Activated naive CD4-positive, alpha-beta T cell treated with anti-CD3 and anti-CD28 coated beads, Interleukin-2, amount 10 ng/mL, durations not matched to agents 7 days and 5 days (primary cell): ENCODE measurements at regions of chr2 and their contacts with region 1.

Region 1: DNA sequence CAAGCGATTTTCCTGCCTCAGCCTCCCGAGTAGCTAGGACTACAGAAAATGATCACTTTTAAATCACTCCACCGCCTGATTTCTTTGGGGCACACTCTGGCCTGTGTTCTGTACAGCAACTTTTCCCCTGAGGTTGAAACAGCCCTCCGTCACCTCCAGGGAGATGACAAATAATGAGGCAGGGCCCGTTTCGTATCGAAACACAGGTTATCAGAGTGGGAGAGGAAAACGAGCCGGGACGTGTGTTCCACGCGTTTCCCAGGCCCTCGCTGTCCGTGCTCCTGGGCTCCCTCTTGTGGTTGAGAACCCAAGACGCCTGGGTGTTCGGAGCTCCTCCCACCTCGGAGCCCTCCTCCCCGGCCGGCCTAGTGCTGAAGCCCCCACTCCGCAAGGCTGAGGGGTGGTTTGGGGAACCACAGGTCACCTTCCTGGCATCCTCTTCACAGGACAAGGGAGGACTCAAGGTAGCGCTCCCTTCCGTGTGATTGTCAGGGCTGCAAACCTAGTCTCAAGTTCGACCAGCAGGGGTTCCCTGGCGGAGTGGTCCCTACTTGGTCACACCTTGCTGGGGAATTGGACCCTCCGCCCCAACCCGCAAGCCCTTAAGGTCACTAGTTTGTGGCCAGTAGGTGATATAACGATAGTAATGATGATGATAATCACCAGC is 12.8 kb downstream of the ATP6V1B1 start:
- DNase-seq: peak; percentile 83
- H3K4me3 Mint-ChIP-seq: peak overlapping the region; percentile 39
- H3K27ac Mint-ChIP-seq: no peak overlapping the region
- H3K4me1 Mint-ChIP-seq: peaks cover 12% of the 10 kb centered on the region
- H3K27me3 Mint-ChIP-seq: peaks cover 53% of the 10 kb centered on the region

Region 2: DNA sequence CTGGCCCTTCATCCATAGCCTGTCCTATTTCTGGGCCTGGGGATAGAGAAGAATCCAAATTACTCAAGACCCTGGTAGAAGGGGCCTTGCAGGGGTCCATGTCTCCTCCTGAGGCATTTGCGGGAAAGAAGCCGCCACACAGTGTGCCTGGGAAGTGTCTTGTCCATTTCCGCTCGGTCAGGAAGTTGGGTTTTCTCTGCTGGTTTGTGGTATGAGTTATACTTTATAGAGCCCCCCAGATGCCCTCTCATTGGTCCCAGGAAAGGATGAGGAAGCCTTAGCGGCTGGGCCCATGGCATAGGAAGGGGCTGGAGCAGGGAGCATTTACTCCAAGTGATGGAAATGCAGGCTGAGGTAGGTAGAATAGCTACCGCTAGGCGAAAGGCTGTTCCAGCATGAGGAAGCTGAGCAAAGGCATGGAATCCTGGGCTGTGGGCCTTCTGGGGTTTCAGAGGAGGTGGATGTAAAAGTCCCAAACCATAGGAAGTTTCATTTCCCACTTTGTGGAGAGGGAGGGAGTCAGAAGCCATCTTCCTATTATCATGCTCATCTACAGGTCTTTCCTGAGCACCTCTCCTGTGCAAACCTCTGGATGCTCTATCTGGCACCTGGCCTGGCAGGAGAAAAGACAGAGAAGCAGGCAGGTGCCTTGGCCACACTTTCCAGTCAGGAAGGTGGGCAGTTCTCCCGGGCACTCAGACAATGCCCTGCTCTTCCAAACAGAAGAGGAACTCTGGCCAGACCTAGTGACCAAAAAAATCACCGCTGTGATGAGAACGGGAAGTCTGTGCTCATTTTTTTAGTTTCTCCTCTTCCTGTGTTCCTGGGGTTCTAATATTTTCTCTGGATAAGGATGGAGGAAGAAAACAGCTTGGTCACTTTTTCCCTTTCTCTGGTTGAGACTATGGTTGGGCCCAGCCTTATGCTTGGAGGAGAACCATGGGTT is 110.2 kb before region 1 on chr2:
- CTCF ChIA-PET with region 1: no interaction called
- DNase-seq: no peak
- H3K4me3 Mint-ChIP-seq: no peak overlapping the region
- H3K27ac Mint-ChIP-seq: no peak overlapping the region
- H3K4me1 Mint-ChIP-seq: no peaks in the 10 kb centered on the region
- H3K27me3 Mint-ChIP-seq: peaks cover 50% of the 10 kb centered on the region

Region 3: DNA sequence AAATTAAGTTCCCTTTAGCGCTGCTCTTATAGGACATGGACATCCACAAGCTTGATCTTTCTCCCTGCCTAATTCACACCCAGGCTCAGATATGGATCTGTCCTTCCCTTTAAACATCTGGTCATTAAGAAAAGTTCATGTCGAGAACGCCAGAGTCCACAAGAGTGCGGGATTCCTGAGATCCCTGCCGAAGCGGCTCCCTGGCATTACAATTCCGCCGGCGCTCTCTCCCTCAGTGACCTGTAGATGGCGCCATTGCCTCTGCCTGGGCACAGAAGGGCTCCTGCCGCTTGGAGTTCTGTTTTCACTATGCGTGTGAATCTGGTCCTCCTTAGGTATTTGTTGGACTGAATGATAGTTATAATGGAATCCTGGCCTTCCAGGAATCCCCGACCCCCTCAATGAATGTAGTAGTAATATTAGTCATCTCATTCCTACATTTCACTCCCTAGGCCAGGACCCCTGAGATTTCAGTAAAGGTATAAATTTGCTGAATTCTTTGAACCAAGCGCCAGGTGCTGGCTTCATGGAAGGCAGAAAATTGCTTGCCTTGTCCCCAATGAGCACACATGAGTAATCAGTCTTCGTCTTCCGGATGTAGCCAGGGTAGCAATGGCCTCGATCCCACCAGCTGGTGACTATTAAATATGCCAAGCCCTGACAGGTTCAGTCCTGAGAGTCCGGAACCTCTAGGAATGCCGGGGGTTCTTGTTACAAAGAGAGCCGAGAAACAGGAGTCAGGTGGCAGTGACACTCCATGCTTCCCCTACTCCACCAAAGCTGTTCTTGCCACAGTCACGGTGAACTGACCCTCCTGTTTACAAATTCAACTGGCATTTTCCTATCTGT is 86.5 kb before region 1 on chr2:
- CTCF ChIA-PET with region 1: interaction called, 16 read pairs
- DNase-seq: peak; percentile 79
- H3K4me3 Mint-ChIP-seq: no peak overlapping the region
- H3K27ac Mint-ChIP-seq: no peak overlapping the region
- H3K4me1 Mint-ChIP-seq: no peaks in the 10 kb centered on the region
- H3K27me3 Mint-ChIP-seq: peaks cover 55% of the 10 kb centered on the region

Region 4: GRCh38 chr2:70935468-70936164 is 12.9 kb before region 1 on chr2 and contains the start of gene ATP6V1B1:
- CTCF ChIA-PET with region 1: interaction called, 17 read pairs
- DNase-seq: no peak
- H3K4me3 Mint-ChIP-seq: no peak within 1 kb of the TSS
- H3K27ac Mint-ChIP-seq: no peak within 1 kb of the TSS
- H3K4me1 Mint-ChIP-seq: no peaks in the 10 kb centered on the region
- H3K27me3 Mint-ChIP-seq: peaks cover 59% of the 10 kb centered on the region

Region 5: DNA sequence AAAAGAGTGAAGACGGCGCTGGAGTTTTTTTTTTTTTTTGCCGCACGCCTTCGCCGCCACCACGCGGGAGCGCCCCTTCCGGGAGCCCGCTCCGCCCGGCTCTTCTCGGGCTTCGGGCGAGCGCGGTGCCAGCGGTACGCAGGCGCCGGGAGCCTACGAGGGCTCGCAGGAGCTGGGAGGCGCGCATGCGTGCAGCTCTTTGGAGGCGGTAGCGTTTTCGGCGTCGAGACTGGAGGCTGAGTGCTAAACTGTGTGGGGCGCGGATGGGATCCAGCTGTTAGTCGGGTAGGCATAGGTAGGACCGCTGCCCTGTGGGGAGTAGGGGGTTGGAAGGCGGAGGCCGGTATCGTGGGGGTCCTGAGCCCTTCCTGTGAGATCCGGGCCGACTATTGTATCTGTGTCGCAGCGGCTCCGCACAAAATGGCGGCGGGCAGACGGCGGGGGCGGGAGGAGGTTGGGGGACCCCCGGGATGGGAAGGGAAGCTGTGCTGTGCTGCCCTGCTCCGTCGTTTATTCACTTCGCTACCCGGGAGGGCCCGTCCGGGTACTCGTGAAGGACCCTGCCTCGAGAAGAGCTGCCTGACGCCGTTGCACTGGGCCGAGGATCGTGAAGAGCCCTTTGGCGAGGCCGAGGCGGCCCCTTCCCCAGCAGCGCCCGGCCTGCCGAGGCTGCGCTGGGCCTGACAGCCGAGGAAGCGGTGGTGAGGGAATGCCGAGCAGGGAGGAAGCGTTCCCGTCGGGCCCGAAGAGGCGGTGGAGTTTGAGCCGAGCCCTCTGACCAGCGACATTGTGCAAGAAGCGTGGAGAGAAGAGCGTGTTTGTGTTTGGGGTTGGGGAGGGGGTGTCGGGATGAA is 383.3 kb after region 1 on chr2 and contains the start of gene ZNF638:
- CTCF ChIA-PET with region 1: no interaction called
- DNase-seq: peak; percentile 94
- H3K4me3 Mint-ChIP-seq: peak within 1 kb of the TSS; percentile 100
- H3K27ac Mint-ChIP-seq: peak within 1 kb of the TSS; percentile 99
- H3K4me1 Mint-ChIP-seq: peaks cover 29% of the 10 kb centered on the region
- H3K27me3 Mint-ChIP-seq: peaks cover 9% of the 10 kb centered on the region